HCT116 (cell line): ENCODE measurements at regions of chr22 and their contacts with region 1.

Region 1: DNA sequence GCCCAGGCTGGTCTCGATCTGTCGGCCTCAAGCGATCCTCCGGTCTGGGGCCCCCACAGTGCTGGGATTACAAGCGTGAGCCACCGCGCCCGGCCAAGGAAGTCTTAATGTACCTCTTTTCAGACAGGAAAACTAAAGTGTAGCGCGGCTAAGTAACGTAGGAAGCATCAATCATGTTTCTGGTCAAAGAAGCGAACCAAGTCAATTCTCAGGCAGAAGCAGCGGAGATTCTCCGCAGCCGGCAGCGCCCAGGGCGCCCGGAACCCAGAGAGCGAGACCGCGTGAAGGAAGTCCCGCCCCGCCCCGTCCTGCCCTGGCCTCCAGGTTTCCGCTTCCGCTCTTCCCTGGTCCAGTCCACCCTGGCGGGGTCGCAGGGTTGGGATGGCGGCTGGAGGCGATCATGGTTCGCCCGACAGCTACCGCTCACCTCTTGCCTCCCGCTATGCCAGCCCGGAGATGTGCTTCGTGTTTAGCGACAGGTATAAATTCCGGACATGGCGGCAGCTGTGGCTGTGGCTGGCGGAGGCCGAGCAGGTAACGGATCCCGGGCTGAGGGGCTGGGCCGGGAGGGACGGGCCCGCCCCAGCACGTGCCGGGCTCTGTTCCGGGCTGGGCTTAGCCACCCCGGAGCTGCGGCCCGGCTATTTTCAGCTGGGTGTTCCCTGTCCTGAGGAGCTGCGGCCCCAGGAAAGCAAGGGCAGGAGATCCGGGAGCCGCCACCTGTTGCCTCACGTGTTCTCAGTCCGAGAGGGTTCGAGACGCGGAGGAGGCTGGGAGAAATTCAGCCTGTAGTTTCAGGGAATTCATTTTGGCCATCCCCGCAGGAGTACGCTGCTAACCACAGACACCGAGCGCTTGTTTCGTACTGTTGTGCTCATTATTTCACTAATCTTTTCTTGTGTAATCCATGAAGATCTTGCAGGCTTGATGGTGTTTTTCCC is at the start of gene ADSL:
- DNase-seq: peak; percentile 47
- ATAC-seq: peak; percentile 92
- H3K4me3 ChIP-seq: peak within 1 kb of the TSS; percentile 72 to 96
- H3K27ac ChIP-seq: peak within 1 kb of the TSS; percentile 92
- H3K4me1 ChIP-seq: peaks cover 8 to 17% of the 10 kb centered on the region in 2 experiments; a peak in 3 of 4 replicates
- H3K27me3 ChIP-seq: no peaks in the 10 kb centered on the region
- CTCF ChIP-seq: no peak
- POLR2A ChIP-seq: peak; percentile 97
- RAD21 ChIP-seq: 0 out of 2 replicates have a peak, but pooled peaks have one; percentile 4
- total RNA-seq, gene ADSL: 126 TPM

Region 2: GRCh38 chr22:39932918-39933649 is 413.4 kb before region 1 on chr22:
- CTCF ChIA-PET with region 1: interaction called, 3 read pairs
- POLR2A ChIA-PET with region 1: no interaction called
- RAD21 ChIA-PET with region 1: no interaction called
- intact Hi-C with region 1: loop called (anchors 10 kb)
- DNase-seq: peak; percentile 35
- ATAC-seq: peak; percentile 81
- H3K4me3 ChIP-seq: no peak overlapping the region
- H3K27ac ChIP-seq: no peak overlapping the region
- H3K4me1 ChIP-seq: no peaks in the 10 kb centered on the region
- H3K27me3 ChIP-seq: peaks cover 87% of the 10 kb centered on the region
- CTCF ChIP-seq: peak; percentile 65 to 95 (median 89); a peak in 5 of 6 replicates
- POLR2A ChIP-seq: no peak
- RAD21 ChIP-seq: peak; percentile 63

Region 3: DNA sequence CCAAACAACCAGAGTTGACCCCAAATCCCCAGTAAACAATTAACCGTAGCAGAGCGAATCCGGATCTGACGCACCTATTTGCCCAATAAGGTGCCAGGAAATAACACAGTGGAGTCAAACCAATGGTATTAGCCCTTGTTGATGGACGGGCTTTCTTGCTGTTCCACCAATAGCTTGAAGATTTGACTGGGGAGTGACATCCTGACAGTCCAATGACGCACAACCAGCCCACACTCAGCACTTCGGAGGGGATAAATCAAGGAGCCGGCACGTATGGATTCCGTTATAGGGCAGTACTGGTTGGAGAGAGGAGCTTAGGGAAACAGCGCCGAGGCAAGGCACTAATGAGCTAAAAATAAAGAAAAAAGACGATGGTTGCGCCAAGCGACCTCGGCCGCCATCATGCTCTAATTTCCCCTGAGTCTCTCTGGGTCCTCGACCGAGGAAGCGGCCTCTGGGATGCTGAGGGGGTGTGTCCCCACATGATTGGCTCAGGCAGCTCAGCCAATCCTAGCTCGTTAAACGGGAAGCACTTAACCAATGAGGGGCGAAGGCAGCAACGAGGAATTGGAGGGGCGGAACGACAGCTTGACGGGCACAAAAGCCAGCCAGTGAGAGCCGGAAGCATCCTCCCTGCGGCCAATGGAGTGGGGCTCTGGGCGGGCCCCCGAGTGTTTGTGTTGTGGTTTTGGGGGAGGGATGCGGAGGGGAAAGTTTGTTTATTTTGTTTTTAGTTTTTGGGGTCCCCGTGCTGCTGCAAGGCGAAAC is 302.2 kb before region 1 on chr22:
- CTCF ChIA-PET with region 1: interaction called, 5 read pairs
- POLR2A ChIA-PET with region 1: interaction called, 18 read pairs
- RAD21 ChIA-PET with region 1: interaction called, 4 to 5 read pairs
- intact Hi-C with region 1: loop called (anchors 2 kb)
- DNase-seq: peak; percentile 98
- ATAC-seq: peak; percentile 91
- H3K4me3 ChIP-seq: peak overlapping the region; percentile 57 to 68
- H3K27ac ChIP-seq: peak overlapping the region; percentile 65
- H3K4me1 ChIP-seq: peaks cover 8 to 17% of the 10 kb centered on the region in 2 experiments
- H3K27me3 ChIP-seq: no peaks in the 10 kb centered on the region
- CTCF ChIP-seq: no peak
- POLR2A ChIP-seq: no peak
- RAD21 ChIP-seq: no peak

Region 4: GRCh38 chr22:40177738-40178416 is 168.6 kb before region 1 on chr22 and contains the start of gene TNRC6B:
- CTCF ChIA-PET with region 1: no interaction called
- POLR2A ChIA-PET with region 1: interaction called, 3 read pairs
- RAD21 ChIA-PET with region 1: interaction called in 1 of 2 experiments, 4 read pairs
- intact Hi-C with region 1: loop called (anchors 1 kb)
- DNase-seq: peak; percentile 95
- ATAC-seq: peak; percentile 87
- H3K4me3 ChIP-seq: peak within 1 kb of the TSS; percentile 60 to 80
- H3K27ac ChIP-seq: peak within 1 kb of the TSS; percentile 59
- H3K4me1 ChIP-seq: peaks cover 17 to 34% of the 10 kb centered on the region in 2 experiments
- H3K27me3 ChIP-seq: no peaks in the 10 kb centered on the region
- CTCF ChIP-seq: no peak
- POLR2A ChIP-seq: peak; percentile 98
- RAD21 ChIP-seq: peak; percentile 33
- total RNA-seq, gene TNRC6B: 29.8 TPM

Region 5: GRCh38 chr22:40276996-40277823 is 69.2 kb before region 1 on chr22:
- CTCF ChIA-PET with region 1: no interaction called
- POLR2A ChIA-PET with region 1: no interaction called
- RAD21 ChIA-PET with region 1: no interaction called
- intact Hi-C with region 1: no loop called
- DNase-seq: no peak
- ATAC-seq: no peak
- H3K4me3 ChIP-seq: no peak overlapping the region
- H3K27ac ChIP-seq: no peak overlapping the region
- H3K4me1 ChIP-seq: peaks cover 3 to 19% of the 10 kb centered on the region in 2 experiments; a peak in 3 of 4 replicates
- H3K27me3 ChIP-seq: no peaks in the 10 kb centered on the region
- CTCF ChIP-seq: no peak
- POLR2A ChIP-seq: no peak
- RAD21 ChIP-seq: no peak